HCT116 (cell line): ENCODE measurements at regions of chr15 and their contacts with region 1.

Region 1: GRCh38 chr15:64387562-64388168 is at the start of gene TRIP4:
- DNase-seq: peak; percentile 93
- ATAC-seq: peak; percentile 99
- H3K4me3 ChIP-seq: peak within 1 kb of the TSS; percentile 75 to 97
- H3K27ac ChIP-seq: peak within 1 kb of the TSS; percentile 64
- H3K4me1 ChIP-seq: peaks cover 6 to 15% of the 10 kb centered on the region in 2 experiments; a peak in 3 of 4 replicates
- H3K27me3 ChIP-seq: no peaks in the 10 kb centered on the region
- CTCF ChIP-seq: no peak
- POLR2A ChIP-seq: peak; percentile 91
- RAD21 ChIP-seq: peak; percentile 21; the same call in 1 of the 2 replicates
- total RNA-seq, gene TRIP4: 18.3 TPM

Region 2: DNA sequence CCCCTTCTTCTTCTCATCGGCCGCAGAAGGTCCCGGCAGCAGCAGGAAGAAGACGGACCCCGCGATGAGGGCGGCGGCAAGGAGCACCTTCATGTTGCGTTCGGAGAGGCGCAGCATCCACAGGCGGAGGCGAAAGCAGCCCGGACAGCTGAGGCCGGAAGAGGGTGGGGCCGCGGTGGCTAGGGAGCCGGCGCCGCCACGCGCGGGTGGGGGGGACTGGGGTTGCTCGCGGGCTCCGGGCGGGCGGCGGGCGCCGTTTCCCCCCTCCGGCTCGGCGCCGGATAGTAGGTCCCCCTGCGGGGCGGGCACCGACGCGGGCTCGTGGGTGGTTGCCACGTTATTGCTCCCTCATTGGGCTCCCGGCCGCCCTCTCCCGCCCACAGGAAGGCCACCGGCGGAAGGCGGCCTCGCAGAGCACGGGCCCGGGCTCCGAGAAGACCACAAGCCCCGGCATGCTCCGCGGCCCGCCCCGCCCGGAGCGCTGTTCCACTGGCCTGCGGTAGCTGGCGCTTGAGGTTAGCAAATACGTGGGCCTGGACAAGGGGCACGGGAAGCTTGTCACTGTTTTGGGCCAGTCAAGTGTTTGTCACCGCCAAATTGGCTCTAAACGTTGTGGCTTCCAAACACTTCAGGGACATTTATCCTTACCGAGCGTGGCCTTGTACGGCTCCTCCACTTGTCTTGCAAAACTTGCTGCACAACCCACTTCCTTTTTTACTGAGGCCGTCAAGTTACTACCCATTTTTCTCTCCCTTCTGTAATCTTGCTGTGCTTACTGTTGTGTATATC is 224.6 kb before region 1 on chr15 and contains the start of gene PPIB:
- CTCF ChIA-PET with region 1: interaction called, 5 read pairs
- POLR2A ChIA-PET with region 1: interaction called, 8 read pairs
- RAD21 ChIA-PET with region 1: no interaction called
- intact Hi-C with region 1: loop called (anchors 2 kb)
- DNase-seq: peak; percentile 88
- ATAC-seq: peak; percentile 95
- H3K4me3 ChIP-seq: peak within 1 kb of the TSS; percentile 85 to 97
- H3K27ac ChIP-seq: peak within 1 kb of the TSS; percentile 68
- H3K4me1 ChIP-seq: peaks cover 4 to 14% of the 10 kb centered on the region in 2 experiments; a peak in 3 of 4 replicates
- H3K27me3 ChIP-seq: no peaks in the 10 kb centered on the region
- CTCF ChIP-seq: peak; percentile 28 to 62 (median 52)
- POLR2A ChIP-seq: peak; percentile 48
- RAD21 ChIP-seq: peak; percentile 88
- total RNA-seq, gene PPIB: 453 TPM

Region 3: DNA sequence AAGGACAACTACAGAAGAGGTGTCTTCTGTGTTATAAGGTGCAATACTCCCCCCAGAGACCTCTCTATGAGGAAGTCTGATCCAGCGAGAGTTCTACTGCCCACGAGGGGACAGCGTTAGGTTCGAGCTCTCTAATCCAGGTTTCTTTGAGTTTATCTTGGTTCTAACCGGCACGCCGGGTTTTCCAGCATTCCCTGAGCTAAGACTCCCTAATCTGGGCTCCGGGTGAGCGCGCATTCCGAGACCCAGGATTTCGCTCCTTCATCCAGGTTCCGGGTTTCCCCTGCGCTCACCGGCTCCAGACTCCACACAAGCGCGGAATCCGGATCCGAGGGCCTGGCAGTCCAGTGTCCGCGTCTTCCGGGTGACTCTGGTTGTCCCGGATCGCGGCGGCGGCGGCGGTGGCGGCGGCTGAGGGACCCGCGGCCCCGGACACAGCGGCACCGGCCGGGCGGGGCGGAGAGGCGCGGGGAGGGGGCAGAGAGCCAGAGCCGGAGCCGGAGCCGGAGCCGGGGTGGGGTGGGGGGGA is 72.6 kb after region 1 on chr15 and contains the start of gene ZNF609:
- CTCF ChIA-PET with region 1: no interaction called
- POLR2A ChIA-PET with region 1: no interaction called
- RAD21 ChIA-PET with region 1: no interaction called
- intact Hi-C with region 1: loop called (anchors 5 kb)
- DNase-seq: peak; percentile 95
- ATAC-seq: peak; percentile 90
- H3K4me3 ChIP-seq: peak within 1 kb of the TSS; percentile 49 to 65
- H3K27ac ChIP-seq: peak within 1 kb of the TSS; percentile 60
- H3K4me1 ChIP-seq: peaks cover 16 to 19% of the 10 kb centered on the region in 2 experiments
- H3K27me3 ChIP-seq: no peaks in the 10 kb centered on the region
- CTCF ChIP-seq: no peak
- POLR2A ChIP-seq: no peak
- RAD21 ChIP-seq: peak; percentile 19
- total RNA-seq, gene ZNF609: 31.0 TPM

Region 4: DNA sequence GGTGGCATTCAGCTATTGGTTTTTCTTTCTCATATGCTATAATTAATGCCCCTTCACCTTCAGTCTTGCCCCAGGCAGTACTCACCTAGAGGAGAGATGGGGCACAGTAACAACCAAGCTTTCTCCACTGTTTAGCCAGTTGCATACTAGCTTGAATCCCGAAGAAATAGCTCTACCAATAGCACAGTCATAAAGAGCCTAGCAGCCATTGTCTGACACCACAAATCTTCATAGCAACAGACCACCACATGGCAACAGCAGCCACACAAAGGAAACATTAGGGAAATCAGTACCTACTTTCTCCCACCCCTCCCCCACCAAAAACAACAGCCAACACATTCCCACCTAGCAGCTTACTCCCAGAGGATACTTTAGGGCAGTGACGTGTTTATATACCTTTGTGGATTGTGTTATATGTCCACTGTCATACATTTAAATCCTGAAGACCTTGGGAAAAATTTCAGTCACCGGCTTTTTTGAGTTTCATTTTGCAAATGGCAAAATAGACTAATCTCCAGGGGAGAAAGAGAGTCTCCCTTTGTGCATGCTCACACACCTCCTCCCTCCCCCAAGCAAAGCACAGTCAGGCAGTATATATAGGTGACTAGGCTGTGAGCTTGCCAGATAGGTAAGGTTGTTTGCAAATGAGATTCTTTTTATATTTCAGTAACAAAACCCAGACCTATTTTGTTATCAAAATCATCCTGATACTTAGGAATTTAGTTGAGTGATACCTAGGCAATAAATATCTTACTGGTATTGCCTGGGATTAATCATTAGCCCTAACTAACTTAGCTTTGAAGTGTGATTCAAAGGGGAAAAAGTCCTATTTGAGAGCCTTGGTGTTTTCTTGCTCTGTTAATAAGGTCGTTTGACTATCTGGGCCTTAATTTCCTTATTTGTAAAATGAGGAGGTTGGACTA is 247.2 kb after region 1 on chr15:
- CTCF ChIA-PET with region 1: no interaction called
- POLR2A ChIA-PET with region 1: no interaction called
- RAD21 ChIA-PET with region 1: no interaction called
- intact Hi-C with region 1: no loop called
- DNase-seq: no peak
- ATAC-seq: no peak
- H3K4me3 ChIP-seq: no peak overlapping the region
- H3K27ac ChIP-seq: no peak overlapping the region
- H3K4me1 ChIP-seq: peaks cover 7 to 16% of the 10 kb centered on the region in 2 experiments; a peak in 2 of 4 replicates
- H3K27me3 ChIP-seq: no peaks in the 10 kb centered on the region
- CTCF ChIP-seq: no peak
- POLR2A ChIP-seq: no peak
- RAD21 ChIP-seq: no peak